HEK293 (cell line): ENCODE measurements at regions of chr6 and their contacts with region 1.

Region 1: DNA sequence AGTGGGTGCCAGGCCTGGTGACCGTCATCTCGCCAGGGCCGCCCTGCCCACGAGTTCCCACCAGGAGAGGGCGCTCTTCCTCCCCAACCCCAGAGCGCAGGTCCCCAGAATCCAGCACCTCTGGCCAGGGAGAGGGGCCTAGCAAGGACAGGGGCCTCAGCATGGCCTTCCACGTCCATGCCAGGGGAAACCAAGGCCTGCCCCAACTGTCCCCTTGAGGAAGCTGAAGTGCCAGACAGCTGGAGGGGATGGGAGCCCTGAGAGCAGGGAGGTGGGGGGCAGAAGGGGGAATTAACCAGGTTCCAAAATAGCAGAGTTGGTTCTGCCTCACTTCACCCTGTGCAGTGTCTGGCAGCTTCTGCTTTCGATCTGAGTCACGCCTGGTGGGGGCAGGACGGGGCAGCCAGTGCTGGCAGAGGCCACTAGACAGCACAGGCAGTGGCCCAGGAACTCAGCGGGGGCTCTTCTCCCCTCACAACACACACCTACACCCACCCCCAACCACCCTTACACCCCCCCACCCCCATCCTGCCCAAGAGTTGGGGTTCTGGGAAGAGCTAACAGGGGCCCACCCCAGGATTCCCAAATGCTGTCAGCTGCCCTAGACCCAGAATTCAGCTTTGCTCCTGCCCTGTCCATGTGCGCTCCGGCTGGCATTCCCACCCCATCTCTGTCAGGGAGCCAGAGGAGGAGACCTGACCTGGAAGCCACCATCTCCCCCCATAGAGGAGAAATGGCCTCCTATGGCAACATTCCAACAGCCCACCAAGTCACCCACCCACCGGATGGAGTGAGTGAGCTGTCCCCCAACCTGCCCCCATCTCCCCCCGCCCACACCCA is 29.2 kb downstream of the TFEB start:
- H3K4me3 ChIP-seq: no peak overlapping the region
- H3K27ac ChIP-seq: no peak overlapping the region
- H3K4me1 ChIP-seq: no peaks in the 10 kb centered on the region
- CTCF ChIP-seq: peak; percentile 76

Region 2: GRCh38 chr6:41716516-41717391 is 10.5 kb after region 1 on chr6:
- CTCF ChIA-PET with region 1: interaction called, 71 read pairs
- POLR2A ChIA-PET with region 1: interaction called, 3 read pairs
- H3K4me3 ChIP-seq: no peak overlapping the region
- H3K27ac ChIP-seq: no peak overlapping the region
- H3K4me1 ChIP-seq: peaks cover 3% of the 10 kb centered on the region; the same call in 1 of the 2 replicates
- CTCF ChIP-seq: no peak

Region 3: DNA sequence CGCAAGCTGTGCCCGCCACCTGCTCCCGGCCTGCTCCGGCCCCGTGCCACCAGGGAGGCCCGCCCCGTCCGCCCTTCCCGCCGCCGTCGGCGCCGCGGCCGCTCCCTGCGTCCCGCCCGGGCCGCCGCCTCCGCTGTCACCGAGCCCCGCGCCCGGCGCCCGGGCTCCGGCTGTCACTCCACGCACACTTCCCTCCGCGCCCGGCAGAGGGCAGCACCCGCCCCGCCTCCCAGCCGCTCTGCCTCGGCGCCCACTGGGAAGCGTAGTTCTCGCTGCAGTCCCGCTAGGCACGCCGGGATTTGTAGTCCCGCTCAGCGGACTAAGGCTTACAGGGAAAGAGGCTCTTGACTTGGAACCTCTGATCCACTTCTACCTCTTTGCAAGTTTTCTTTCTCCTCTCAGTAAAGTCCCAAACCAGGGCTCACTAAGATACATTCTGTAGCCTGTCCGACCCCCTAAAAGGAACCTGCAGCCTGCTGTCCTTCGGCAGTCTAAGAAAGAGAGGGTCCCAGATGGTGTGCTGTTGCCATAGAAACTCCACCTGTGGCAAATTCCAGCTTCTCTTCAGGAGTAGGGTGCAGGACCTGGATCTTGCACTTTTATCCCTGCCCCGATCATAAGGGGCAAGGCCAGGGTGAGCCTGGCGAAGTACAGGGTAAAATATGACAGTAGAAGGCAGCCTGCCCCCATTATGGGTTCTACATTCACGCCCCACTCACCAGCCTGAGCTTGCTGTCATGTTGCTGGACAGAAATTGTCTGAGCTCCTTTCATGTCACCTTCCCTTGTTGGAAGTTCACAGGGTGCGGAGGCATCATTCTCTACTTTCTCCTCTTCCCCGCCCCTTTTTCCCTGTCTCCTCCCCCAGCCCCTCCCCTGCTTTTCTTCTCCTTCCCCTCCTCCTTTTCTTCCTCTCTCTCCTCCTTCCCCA is 29.5 kb after region 1 on chr6 and contains the start of gene TFEB:
- CTCF ChIA-PET with region 1: interaction called, 14 read pairs
- POLR2A ChIA-PET with region 1: interaction called, 3 read pairs
- H3K4me3 ChIP-seq: peak within 1 kb of the TSS; percentile 58
- H3K27ac ChIP-seq: peak within 1 kb of the TSS; percentile 58; the same call in 1 of the 2 replicates
- H3K4me1 ChIP-seq: 0 out of 2 replicates have a peak, but pooled peaks cover 3% of the 10 kb centered on the region
- CTCF ChIP-seq: peak; percentile 88

Region 4: GRCh38 chr6:41747256-41748101 is 41.3 kb after region 1 on chr6 and contains the start of gene PGC:
- CTCF ChIA-PET with region 1: interaction called, 13 read pairs
- POLR2A ChIA-PET with region 1: no interaction called
- H3K4me3 ChIP-seq: no peak within 1 kb of the TSS
- H3K27ac ChIP-seq: no peak within 1 kb of the TSS
- H3K4me1 ChIP-seq: no peaks in the 10 kb centered on the region
- CTCF ChIP-seq: no peak

Region 5: GRCh38 chr6:41767156-41767833 is 61.1 kb after region 1 on chr6:
- CTCF ChIA-PET with region 1: interaction called, 19 read pairs
- POLR2A ChIA-PET with region 1: no interaction called
- H3K4me3 ChIP-seq: no peak overlapping the region
- H3K27ac ChIP-seq: peak overlapping the region; percentile 63
- H3K4me1 ChIP-seq: peaks cover 4% of the 10 kb centered on the region; the same call in 1 of the 2 replicates
- CTCF ChIP-seq: no peak

Region 6: DNA sequence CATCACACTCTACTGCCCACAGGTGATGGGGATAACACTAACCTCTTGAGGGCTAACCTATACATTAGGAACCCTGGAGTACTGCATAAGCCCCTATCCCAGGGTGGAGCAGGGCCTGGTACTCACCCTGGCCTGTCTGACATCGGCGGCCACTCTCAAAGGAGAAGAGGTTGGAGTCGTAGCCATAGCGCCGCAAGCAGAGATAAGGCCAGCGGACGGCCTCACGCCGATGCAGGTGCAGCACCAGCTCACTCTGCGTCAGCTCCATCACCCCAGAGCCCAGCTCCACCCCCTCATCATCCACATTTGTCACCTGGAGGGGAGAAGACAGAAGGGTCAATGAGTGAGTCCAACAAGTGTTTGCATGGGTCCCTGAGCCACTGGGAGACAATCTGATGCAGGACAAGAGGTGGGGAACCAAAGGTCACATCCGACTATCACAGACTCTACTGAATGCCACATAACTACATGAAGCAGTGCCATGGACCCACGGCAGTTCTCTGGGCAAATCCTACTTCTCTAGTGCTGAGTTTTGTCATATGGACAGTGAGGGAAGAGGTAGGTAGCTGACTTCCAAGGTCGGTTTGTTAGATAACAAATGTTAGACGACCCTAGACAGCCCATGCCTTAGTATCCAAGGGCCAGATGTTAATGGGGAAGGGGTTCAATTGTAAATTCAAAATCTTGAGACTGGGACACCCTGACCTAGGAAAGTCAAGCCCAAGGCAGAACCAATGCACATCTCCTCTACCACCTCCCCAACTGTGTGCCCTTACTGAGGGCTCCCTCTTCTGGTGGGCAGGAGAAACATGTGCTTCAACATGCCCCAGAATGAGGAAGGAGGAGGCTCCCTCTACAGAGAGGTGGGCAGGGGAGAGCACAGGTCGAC is 69.3 kb after region 1 on chr6:
- CTCF ChIA-PET with region 1: interaction called, 73 read pairs
- POLR2A ChIA-PET with region 1: no interaction called
- H3K4me3 ChIP-seq: no peak overlapping the region
- H3K27ac ChIP-seq: no peak overlapping the region
- H3K4me1 ChIP-seq: peaks cover 3% of the 10 kb centered on the region; the same call in 1 of the 2 replicates
- CTCF ChIP-seq: peak; percentile 88